ENCODE measurements at regions of chr1 and their contacts with region 1.

Region 1: GRCh38 chr1:35499652-35500176 is 57.5 kb downstream of the KIAA0319L start:
- DNase-seq: peak; percentile 79 to 90 (median 86)
- ATAC-seq: peak; percentile 96
- H3K4me3 ChIP-seq: no peak overlapping the region
- H3K27ac ChIP-seq: peak overlapping the region; percentile 17; the same call in 1 of the 3 replicates
- H3K4me1 ChIP-seq: peaks cover 3 to 25% of the 10 kb centered on the region in 2 experiments; a peak in 4 of 5 replicates
- H3K27me3 ChIP-seq: no peaks in the 10 kb centered on the region
- CTCF ChIP-seq: no peak
- EP300 ChIP-seq: peak; percentile 96
- POLR2A ChIP-seq: no peak
- RAD21 ChIP-seq: 0 out of 4 replicates have a peak, but pooled peaks of 1 of the 2 experiments have one; percentile 21

Region 2: DNA sequence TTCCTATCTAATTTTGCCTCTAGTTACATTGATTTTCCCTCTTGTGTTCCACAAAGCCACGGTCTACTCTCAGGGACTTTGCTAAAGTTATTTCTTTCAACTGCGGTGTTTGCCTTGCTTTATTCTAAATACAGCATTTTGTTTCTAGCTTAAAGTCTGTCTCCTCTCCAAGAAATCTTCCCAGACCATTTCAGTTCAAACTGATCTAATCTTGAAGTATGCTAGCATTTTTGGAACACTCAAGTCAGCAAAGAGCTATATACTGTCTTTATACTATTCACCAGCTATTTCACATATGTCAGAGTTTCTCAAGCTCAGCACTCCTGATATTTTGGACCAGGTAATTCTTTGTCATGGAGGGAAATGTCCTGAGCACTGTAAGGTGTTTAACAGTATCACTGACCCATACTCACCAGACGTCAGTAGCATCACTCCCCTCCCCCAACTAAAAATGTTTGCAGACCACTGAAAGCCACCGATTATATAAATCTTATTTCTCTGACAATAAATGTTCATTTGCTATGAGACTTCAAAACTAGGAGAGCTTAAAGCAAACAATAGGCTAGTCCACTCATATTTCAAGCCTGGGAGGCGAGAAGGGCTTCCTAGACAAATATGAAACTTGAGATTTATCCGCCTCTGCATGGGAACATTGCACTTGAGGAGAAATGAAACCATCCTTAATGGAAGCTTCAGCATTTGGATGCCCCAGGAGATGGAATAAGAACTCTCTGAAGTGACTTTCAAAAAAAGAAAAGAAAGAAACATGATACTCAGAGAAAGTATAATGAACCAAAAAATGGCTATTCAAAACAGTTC is 23.6 kb before region 1 on chr1:
- CTCF ChIA-PET with region 1: no interaction called
- POLR2A ChIA-PET with region 1: no interaction called
- in situ Hi-C with region 1: no loop called
- intact Hi-C with region 1: no loop called
- DNase-seq: no peak
- ATAC-seq: no peak
- H3K4me3 ChIP-seq: no peak overlapping the region
- H3K27ac ChIP-seq: no peak overlapping the region
- H3K4me1 ChIP-seq: no peaks in the 10 kb centered on the region
- H3K27me3 ChIP-seq: no peaks in the 10 kb centered on the region
- CTCF ChIP-seq: no peak
- EP300 ChIP-seq: no peak
- POLR2A ChIP-seq: no peak
- RAD21 ChIP-seq: no peak

Region 3: DNA sequence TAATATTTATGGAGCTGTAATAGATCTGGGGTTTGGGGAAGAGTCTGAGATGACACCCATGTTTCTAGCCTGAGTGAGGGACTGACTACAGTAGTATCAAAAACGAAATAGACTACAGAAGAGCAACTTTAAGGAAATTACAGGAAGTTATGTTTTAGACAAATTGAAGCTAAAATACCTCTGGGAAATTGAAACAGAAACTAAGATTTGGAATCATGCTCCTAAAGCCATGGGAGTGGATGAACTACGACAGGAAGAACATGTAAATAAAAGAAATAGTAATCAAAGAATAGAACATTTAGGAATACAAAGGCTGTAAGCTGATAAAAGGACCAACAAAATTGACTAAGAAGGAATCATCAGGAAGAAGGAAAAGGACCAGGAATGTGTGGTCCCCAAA is 11.4 kb before region 1 on chr1:
- CTCF ChIA-PET with region 1: no interaction called
- POLR2A ChIA-PET with region 1: interaction called, 10 read pairs
- in situ Hi-C with region 1: no loop called
- intact Hi-C with region 1: no loop called
- DNase-seq: no peak
- ATAC-seq: no peak
- H3K4me3 ChIP-seq: no peak overlapping the region
- H3K27ac ChIP-seq: no peak overlapping the region
- H3K4me1 ChIP-seq: no peaks in the 10 kb centered on the region
- H3K27me3 ChIP-seq: no peaks in the 10 kb centered on the region
- CTCF ChIP-seq: no peak
- EP300 ChIP-seq: no peak
- POLR2A ChIP-seq: no peak
- RAD21 ChIP-seq: no peak

Region 4: GRCh38 chr1:35544978-35545377 is 45.3 kb after region 1 on chr1:
- CTCF ChIA-PET with region 1: no interaction called
- POLR2A ChIA-PET with region 1: no interaction called
- in situ Hi-C with region 1: no loop called
- intact Hi-C with region 1: loop called (anchors 5 kb)
- DNase-seq: peak; percentile 67 to 87 (median 79)
- ATAC-seq: peak; percentile 95
- H3K4me3 ChIP-seq: no peak overlapping the region
- H3K27ac ChIP-seq: no peak overlapping the region
- H3K4me1 ChIP-seq: no peaks in the 10 kb centered on the region; a peak in 1 of 5 replicates
- H3K27me3 ChIP-seq: no peaks in the 10 kb centered on the region
- CTCF ChIP-seq: peak; percentile 79 to 92 (median 84)
- EP300 ChIP-seq: no peak
- POLR2A ChIP-seq: no peak
- RAD21 ChIP-seq: peak; percentile 59 to 88